ENCODE measurements at regions of chr1 and their contacts with region 1.

Region 1: DNA sequence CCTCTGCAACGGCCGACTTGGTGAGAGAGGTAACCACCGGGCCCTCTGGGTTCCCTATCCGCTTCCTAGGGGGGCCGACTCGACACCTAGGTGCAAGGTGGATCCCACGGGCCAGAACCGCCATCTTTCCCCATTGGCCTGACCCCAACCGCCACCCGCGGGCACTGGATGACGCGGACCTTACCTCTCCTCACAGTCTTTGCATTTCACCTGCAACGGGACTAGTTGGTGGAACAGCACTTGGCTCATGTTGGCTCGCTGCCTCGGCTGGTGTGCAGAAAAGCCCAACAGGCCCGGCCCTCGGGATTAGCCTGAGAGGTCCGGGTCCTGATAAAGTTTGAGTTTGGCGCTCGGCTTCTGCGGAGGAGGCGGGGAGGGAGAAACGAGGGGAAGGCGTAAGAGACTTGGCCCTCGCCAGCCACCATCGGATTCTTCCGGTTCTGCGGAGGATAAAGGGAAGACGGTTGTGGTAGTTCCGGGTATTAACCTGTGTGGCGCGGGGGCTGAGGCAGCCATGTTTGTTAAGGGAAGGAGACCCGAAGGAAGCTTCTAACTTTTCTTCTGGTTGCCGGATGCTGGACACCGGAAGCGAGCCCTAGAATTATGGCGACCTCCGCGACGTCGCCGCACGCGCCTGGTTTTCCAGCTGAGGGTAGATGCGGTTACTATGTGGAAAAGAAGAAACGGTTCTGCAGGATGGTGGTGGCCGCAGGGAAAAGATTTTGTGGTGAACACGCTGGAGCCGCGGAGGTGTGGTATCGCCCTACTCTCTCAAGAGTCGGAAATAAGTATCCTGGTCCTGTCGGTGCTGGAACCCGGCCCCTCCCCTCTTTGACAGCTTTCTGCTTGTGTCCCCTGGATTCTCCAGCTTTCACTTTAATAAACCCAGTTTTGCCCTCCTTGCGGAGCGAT is at the starts of genes SASS6 and TRMT13:
- DNase-seq: peak; percentile 95 to 99 (median 98)

Region 2: DNA sequence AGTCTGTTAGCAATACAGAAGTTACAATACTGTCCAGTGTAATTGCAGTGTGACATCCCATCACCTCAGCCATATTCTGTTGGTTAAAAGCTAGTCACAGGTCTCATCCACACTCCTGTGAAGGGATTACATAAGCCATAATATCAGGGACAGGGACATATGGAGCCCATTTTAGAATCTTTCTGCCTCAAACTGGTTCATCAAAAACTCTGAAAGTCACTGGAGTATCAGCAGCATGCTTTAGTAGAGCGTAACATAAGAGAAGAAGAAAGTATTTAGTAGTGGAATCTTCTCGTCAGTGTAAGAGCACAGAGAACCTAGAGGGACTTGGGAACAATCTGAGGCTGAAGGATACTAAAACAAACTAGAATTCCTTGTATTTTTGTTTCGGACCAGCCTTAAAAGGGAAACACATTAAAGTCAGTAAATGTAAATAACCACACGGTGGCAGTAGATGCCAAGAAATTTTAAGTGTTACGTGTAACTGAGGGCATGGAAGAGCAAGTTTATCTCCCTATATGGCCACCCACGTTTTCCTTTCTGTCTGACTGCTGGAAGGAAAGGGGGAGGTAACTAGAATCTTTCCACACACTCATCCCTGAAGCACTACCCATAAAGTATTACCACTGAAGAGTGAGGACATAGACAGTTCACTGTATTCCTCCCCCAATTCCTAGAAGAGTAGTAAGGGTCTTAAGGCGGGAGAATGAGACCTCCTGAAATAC is 324.3 kb before region 1 on chr1:
- intact Hi-C with region 1: loop called (anchors 5 kb)
- DNase-seq: no peak

Region 3: DNA sequence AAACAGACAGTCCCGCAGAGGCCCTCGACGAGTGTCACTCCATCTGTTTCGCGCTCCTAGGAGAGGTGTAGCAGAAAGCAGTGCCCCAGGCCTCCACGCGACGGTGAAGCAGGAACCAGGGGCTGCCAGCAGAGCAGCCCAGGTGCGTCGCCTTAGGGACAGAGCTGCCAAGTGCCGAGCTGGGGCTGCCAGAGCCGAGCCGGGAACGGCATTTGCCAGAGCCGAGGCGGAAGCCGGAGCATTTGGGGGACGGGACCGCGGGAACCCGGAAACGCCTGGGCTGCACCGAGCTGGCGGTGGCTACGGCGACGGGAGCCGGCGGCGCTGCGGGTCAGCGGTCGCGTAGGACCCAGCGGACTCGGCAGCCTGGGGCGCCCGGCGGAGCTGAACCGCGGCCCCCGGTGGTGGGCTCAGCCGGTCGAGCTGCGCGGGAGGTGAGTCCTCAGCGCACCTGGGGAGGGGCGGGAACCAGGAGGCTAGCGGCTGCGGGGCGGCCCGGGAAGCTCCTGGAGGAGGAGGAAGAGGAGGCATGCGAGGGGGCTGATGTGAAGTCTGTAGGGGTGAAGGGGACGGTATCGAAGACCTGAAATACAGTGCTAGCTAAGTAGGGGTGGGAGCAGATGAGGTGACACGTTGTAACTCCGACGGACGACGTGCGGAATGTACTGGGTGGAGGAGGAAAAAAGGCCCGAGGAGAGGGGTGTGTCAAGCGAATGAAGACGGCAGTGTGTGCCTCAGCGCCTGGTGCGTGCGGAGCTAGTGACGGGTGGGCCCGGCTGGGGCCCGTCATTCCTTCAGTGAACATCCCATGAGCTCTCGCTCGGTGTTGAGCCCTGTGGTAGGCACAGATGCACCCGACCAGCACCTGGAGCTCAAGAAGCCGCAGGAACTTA is 162.8 kb before region 1 on chr1 and contains the start of gene SLC35A3:
- intact Hi-C with region 1: loop called (anchors 10 kb)
- DNase-seq: peak; percentile 74 to 97 (median 84)

Region 4: GRCh38 chr1:100077531-100077930 is 55.3 kb before region 1 on chr1:
- intact Hi-C with region 1: no loop called
- DNase-seq: no peak

Region 5: DNA sequence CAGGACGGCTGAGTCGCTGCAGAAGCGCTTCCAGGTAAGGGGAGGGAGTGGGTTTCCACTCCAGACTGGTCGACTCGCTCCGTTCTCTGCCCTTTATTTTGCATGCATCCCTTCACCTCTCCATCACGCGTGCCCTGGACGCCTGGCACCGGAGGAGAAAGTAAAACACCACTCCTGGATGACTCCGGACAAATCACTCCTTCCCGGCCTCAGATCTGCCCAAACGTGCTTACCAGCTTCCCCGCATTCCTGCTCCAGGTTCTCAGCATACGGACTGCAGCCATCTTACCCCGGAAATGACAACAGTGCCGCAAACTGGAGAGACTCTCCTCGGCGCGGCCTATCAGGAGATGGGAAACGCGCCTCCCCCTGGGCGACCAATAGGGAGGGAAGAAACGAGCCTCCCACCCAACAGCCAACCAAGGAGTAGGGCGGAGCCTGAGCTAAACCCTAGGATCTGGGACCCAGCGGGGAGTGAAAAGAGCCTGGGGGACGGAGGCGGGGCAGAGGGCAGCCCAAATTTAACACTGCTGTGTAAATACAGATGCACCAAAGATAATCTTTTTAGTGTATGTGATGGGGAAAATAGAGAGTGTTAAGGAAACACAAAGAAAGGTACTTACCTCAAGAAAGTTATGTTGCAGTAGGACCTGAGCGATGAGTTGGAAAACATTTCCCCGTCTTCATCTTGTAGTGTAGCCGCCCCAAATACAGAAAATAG is 116.9 kb after region 1 on chr1 and contains the start of gene DBT:
- intact Hi-C with region 1: loop called (anchors 5 kb)
- DNase-seq: peak; percentile 95 to 99 (median 97)

Region 6: DNA sequence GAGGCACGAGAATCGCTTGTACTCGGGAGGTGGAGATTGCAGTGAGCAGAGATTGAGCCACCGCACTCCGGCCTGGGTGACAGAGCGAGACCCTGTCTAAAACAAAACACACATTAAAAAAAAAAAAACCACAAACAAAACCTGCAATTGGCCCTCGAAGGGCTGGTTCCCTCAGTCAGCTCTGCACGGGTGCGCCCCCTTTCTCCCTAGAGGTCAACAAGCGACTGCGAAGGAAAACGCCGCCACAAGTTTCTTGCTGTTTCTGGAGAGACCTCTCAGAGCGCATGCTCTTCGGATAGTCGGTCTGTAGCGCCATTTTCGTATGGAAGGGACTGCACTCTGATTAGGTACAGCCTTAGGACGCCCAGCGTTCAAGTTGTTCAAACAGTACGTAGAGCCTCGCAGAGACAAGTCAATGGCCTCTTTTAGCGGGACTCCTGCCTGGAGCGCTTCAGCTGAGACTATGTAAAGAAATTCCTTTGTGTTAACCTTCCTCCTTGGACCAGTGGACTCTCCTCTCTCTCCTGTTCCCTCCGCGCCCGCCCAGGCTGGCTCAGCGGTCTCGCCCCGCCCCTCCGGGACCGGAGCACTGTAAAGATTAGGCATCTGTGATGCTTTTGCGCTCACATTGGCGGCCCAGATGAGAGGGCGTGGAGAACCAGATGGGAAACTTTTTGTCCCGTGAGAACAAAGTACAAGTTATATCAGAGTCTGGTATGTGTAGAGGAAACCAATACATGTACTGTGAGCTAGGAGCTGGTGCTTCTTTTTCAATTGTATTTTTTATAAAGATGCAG is 218.5 kb after region 1 on chr1:
- intact Hi-C with region 1: loop called (anchors 2 kb)
- DNase-seq: peak; percentile 49 to 91 (median 70)

Region 7: DNA sequence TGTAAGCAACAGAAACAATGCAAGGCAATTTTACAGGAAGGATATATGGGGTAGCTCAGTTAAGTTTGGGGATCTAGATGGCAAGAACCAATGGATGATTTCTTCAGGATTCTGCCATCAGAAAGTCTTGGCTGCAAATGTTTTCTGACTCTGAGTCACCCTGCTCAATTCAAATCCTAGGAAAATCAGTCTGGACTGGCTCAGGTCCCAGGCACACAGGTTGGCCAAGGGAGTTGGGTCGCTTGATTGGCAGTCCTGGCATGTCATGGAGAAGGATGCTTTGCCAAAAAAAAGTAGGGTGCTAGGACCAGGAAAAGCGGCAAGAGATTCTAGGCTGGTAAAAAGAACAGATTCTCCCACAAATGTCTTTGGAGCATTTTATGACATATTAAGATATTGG is 1075.1 kb after region 1 on chr1:
- intact Hi-C with region 1: no loop called
- DNase-seq: peak in 8 of 10 donors; percentile 36 to 89 (median 60)